Activated CD4-positive, alpha-beta T cell treated with anti-CD3 and anti-CD28 coated beads, Interleukin-2, amount 10 ng/mL, durations not matched to agents 7 days and 5 days (primary cell): ENCODE measurements at regions of chr11 and their contacts with region 1.

Region 1: DNA sequence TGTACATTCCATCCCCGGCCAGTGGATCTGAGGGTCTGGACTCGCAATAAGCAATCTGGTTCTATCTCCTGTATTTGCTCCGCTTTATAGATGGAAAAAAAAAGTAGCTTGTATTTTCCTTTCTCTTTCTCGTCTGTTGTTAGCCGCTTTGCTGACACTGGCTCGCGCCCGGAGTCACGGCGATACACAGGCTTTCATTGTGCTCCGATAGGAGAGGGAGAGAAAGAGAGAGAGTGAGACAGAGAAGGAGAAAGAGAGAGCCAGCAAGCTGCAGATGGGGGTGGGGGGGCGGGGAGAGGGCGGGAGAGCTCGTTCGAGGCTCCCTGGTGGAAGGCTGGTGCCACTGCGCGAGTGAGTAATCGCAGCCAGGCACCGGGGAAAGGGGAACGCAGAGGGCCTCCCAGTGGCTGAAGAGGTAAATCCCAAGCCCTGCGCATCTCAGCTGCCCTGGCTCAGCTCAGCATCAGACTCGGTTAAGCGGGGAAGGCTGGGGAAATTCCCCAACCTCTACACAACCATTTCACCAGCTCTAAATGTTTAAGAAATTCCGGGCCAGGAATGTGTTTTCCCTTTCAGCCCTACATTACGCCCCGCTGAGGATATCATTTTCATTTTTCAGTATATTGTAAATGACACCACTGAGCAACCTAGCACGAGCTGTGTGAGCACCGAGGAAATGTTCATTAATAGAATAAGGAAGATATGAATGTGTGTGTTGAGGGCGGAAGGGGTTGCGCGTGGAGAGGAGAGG is at the start of gene MAML2:
- DNase-seq: peak; percentile 93
- H3K4me3 Mint-ChIP-seq: peak within 1 kb of the TSS; percentile 96
- H3K27ac Mint-ChIP-seq: peak within 1 kb of the TSS; percentile 88
- H3K4me1 Mint-ChIP-seq: peaks cover 25% of the 10 kb centered on the region
- H3K27me3 Mint-ChIP-seq: no peaks in the 10 kb centered on the region
- total RNA-seq, gene MAML2: 23.4 to 27.2 TPM

Region 2: DNA sequence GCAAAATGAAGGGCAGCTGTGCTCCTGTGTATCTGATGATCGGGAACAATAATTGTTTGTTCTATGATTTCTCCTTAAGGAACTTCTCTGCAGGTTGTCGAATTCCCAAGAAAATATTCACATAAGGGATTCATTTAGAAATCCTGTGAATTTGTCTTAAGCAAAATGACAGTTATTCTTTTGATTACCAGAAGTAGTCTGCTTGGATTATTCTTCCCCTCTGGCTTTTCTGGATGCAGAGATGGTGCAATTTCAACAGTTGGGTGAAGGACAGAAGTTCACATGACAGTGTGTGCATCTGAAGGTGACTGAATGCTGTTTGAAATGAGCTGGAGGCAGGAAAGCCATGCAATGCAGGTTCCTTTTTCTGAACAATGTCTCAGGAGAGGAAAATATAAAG is 282.1 kb before region 1 on chr11:
- CTCF ChIA-PET with region 1: interaction called, 17 read pairs
- POLR2A ChIA-PET with region 1: no interaction called
- DNase-seq: no peak
- H3K4me3 Mint-ChIP-seq: no peak overlapping the region
- H3K27ac Mint-ChIP-seq: no peak overlapping the region
- H3K4me1 Mint-ChIP-seq: peaks cover 52% of the 10 kb centered on the region
- H3K27me3 Mint-ChIP-seq: no peaks in the 10 kb centered on the region

Region 3: DNA sequence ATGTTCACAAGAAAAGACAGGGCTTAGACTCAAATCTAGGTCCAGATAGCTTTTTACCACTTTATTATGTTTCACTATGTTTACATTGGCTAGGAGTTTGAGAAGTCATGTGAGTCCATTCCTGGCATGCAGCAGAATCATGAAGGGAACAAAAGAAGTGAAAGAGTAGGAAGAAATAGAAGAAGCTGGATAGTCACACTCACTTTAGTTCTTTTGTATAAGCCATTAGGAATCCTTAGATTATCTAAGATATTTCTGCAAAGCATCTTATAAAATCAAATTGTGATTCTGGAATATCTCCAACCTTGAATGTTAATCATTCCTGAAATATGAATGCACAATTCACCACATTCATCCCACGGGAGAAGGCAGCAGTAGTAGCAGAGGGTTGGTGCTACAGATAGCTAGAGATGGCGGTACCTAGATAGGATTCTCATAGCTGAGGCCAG is 32.0 kb before region 1 on chr11:
- CTCF ChIA-PET with region 1: interaction called, 14 read pairs
- POLR2A ChIA-PET with region 1: no interaction called
- DNase-seq: no peak
- H3K4me3 Mint-ChIP-seq: no peak overlapping the region
- H3K27ac Mint-ChIP-seq: no peak overlapping the region
- H3K4me1 Mint-ChIP-seq: peaks cover 64% of the 10 kb centered on the region
- H3K27me3 Mint-ChIP-seq: no peaks in the 10 kb centered on the region

Region 4: GRCh38 chr11:96331699-96332116 is 11.4 kb before region 1 on chr11:
- CTCF ChIA-PET with region 1: interaction called, 19 read pairs
- POLR2A ChIA-PET with region 1: no interaction called
- DNase-seq: no peak
- H3K4me3 Mint-ChIP-seq: no peak overlapping the region
- H3K27ac Mint-ChIP-seq: peak overlapping the region; percentile 38
- H3K4me1 Mint-ChIP-seq: peaks cover 70% of the 10 kb centered on the region
- H3K27me3 Mint-ChIP-seq: no peaks in the 10 kb centered on the region

Region 5: DNA sequence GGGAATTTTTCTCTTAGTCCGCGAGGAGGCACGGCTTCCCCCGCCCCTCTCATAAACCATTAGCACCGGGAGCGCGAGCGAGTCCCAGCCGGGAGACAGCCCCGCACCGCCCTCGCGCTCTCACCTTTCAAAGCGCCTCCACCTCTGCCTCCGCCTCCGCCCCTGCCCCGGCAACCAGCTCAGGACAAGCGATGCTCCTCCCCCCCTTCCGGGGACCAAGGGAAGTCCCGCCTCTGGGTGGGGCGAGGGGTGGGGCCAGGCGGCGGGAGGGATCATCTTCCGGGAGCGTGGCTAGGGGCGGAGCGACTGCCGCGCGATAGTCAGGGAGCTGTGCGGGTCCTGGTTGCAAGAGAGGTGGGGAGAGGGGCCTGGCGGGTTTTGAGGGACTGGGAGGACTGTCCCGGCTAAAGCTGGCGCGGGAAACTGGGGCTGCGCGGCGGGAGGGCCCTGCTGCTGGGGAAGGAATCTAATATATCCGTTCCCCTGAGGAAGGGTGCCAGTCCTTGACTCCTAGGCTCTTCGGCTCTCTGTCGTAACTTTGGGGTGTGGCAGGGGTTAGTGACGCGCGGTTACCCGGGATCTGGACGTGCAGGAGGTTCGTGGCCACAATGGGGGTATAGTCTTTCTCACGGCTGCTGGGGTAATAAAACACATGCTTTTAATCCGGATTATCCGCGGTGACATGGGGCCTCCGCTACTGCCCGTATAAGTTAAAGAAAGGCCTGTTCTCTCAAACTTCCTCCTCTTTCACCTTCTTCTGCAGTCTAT is 46.8 kb after region 1 on chr11 and contains the starts of genes CCDC82 and JRKL:
- CTCF ChIA-PET with region 1: interaction called, 20 read pairs
- POLR2A ChIA-PET with region 1: interaction called, 6 read pairs
- DNase-seq: peak; percentile 98
- H3K4me3 Mint-ChIP-seq: peak within 1 kb of the TSS; percentile 89
- H3K27ac Mint-ChIP-seq: peak within 1 kb of the TSS; percentile 95
- H3K4me1 Mint-ChIP-seq: peaks cover 61% of the 10 kb centered on the region
- H3K27me3 Mint-ChIP-seq: no peaks in the 10 kb centered on the region
- total RNA-seq, gene CCDC82: 34.0 to 38.0 TPM
- total RNA-seq, gene JRKL: 10.3 to 10.9 TPM

Region 6: DNA sequence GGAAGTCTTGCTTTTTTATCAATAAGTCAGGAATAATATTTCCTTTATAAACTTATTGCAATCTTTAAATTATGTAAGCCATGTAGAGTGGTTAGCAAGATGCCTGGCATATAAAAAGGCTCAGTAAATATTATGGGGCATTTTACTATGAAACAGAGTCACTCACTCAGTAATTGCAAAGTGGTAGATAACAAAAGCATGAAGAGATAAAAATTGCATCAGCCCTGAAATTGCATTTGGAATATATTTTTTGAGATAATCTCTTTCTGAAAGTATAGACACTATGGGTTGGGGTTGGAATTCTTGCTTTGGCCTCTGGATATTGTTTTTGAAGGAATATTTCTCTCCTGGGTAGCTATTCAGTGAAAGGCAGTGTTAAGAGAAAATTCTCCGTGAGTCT is 235.2 kb after region 1 on chr11:
- CTCF ChIA-PET with region 1: no interaction called
- POLR2A ChIA-PET with region 1: no interaction called
- DNase-seq: no peak
- H3K4me3 Mint-ChIP-seq: no peak overlapping the region
- H3K27ac Mint-ChIP-seq: no peak overlapping the region
- H3K4me1 Mint-ChIP-seq: no peaks in the 10 kb centered on the region
- H3K27me3 Mint-ChIP-seq: no peaks in the 10 kb centered on the region